ENCODE measurements at regions of chr7 and their contacts with region 1.

Region 1: DNA sequence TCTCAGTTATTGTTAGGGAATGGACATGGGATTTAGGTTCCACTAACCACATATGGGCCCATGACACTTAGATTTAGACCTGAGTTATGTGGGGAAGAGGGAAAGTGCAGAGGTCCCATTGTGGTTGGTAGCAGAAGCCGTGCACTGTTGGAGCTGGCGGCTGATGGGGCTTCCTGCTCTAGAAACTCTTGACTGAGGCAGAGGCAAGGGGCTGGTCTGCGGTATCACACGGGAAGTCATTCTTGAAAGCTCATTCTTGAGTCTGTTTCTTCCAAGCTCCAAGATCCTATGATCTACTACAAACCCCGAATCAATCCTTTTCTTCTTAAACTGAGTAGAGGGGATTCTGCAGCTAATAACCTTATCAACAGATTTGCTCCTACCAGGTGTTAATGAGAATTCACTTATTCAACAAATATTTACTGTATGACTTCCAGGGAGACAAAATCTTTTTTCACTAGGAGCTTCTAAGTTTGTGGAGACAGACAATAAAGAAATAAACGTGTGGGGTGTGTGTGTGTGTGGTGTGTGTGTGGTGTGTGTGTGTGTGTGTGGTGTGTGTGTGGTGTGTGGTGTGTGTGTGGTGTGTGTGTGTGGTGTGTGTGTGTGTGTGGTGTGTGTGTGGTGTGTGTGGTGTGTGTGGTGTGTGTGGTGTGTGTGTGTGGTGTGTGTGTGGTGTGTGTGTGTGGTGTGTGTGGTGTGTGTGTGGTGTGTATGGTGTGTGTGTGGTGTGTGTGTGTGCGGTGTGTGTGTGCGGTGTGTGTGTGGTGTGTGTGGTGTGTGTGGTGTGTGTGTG is 57.1 kb downstream of the AOC1 start:
- DNase-seq: no peak
- ATAC-seq: no peak
- H3K4me3 ChIP-seq: no peak overlapping the region
- H3K27ac ChIP-seq: no peak overlapping the region
- H3K4me1 ChIP-seq: peaks cover 0 to under 1% (median 0%) of the 10 kb centered on the region in 12 donors
- H3K27me3 ChIP-seq: peaks cover 0 to 30% (median 0%) of the 10 kb centered on the region in 9 donors
- CTCF ChIP-seq: no peak
- POLR2A ChIP-seq: no peak

Region 2: DNA sequence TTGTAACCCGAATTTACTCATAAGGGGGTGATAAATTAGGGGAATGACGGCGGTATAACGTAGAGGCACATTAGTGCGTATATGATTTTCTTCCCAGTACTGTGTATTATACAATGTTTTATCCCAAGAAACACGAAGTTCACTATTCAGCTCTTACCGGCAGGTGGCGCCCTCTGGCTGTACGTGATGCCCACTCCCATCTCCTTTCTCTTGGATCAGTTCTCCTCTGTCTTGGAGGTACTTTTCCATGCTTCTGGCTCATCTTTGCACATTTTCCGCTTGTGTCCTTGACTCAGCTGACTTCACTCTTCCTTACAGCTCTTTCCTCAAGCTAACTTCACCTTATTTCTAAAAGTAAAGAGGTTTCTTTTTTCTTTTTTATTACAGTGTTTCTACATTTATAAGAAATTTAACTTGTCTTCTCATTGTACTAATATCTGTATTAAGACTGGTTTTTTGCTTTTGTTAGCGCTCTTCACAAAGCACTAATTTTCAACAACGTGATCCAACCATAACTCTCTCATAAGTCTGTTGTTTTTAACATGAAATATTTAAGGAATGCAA is 130.6 kb before region 1 on chr7:
- intact Hi-C with region 1: no loop called
- DNase-seq: peak; percentile 78 to 91 (median 83)
- ATAC-seq: peak; percentile 65 to 89 (median 86)
- H3K4me3 ChIP-seq: no peak overlapping the region
- H3K27ac ChIP-seq: no peak overlapping the region
- H3K4me1 ChIP-seq: peaks cover 0 to 31% (median 0%) of the 10 kb centered on the region in 12 donors
- H3K27me3 ChIP-seq: no peaks in the 10 kb centered on the region
- CTCF ChIP-seq: peak; percentile 84 to 97 (median 91)
- POLR2A ChIP-seq: no peak

Region 3: GRCh38 chr7:150941981-150942590 is 32.7 kb after region 1 on chr7:
- intact Hi-C with region 1: loop called in 1 of 10 experiments (anchors 5 kb)
- DNase-seq: peak in 4 of 5 donors; percentile 64 to 83 (median 74)
- ATAC-seq: peak; percentile 41 to 71 (median 54)
- H3K4me3 ChIP-seq: no peak overlapping the region
- H3K27ac ChIP-seq: peak overlapping the region in 10 of 12 donors; percentile 5 to 77 (median 42)
- H3K4me1 ChIP-seq: peaks cover 0 to 50% (median 10%) of the 10 kb centered on the region in 12 donors
- H3K27me3 ChIP-seq: peaks cover 0 to 11% (median 0%) of the 10 kb centered on the region in 9 donors
- CTCF ChIP-seq: no peak
- POLR2A ChIP-seq: no peak